Tibial artery (tissue), 4 donors: ENCODE measurements at regions of chr2 and their contacts with region 1.

Region 1: DNA sequence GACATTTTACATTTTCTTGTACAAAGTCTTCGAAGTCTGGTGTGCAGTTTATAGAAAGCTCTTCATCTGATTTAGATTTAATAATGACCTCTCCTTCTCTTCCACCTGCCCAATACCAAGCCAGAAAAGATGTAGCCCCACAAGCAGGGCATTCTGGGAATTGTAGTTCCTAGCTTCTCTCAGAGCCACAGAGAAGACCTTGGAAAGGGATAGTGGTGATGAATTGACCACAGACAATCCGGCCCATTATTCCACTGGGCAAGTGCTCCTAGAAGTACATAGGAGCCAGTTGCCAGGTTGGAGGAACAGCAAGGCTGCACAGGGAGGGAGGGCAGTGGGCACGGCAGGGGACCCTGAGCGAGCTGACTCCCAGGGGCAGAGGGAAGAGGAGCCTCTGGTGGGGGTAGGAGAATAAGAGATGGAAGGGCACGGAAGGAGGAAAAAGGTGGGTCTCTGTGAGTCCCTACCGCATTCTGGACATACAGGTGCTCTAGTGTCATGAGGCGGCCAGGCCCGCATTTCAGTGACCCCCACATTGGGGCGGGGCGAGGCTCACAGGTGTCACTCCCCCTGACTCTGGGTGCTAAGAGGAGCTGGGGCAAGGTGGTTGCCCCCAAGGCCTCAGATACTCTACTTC is 152.5 kb upstream of the HAAO start:
- DNase-seq: no peak
- H3K4me3 ChIP-seq: no peak overlapping the region
- H3K27ac ChIP-seq: no peak overlapping the region
- H3K4me1 ChIP-seq: peaks cover 0 to 17% (median 10%) of the 10 kb centered on the region in 4 donors
- H3K27me3 ChIP-seq: no peaks in the 10 kb centered on the region
- CTCF ChIP-seq: no peak

Region 2: DNA sequence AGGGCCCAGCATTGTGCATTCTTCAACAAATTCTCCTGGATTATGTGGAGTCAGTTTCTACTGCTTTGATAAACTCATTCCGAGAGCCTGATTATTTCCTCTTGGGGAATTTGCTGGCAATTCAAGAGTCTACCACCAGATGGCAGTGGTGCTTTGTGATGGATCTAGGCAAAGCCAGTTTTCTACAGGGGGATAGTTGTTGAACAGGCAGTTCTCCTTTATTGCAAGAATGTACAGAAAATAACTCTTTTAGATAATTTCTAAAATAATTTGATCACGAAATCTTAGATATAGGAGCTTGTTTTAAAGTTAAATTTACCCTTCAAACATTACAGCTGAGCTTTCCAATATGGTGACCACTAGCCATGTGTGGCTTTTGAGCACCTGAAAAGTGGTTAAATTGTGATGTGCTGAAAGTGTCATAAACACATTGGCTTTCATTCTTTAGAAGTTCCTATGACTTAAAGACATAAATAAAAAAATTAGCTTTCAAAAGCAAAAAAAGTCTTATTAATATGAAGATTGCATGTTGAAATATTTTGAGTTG is 85.8 kb before region 1 on chr2:
- intact Hi-C with region 1: loop called (anchors 5 kb)
- DNase-seq: peak; percentile 75 to 77
- H3K4me3 ChIP-seq: no peak overlapping the region
- H3K27ac ChIP-seq: peak overlapping the region in 1 of 2 donors; percentile 55
- H3K4me1 ChIP-seq: peaks cover 0 to 27% (median 7%) of the 10 kb centered on the region in 4 donors
- H3K27me3 ChIP-seq: no peaks in the 10 kb centered on the region
- CTCF ChIP-seq: peak; percentile 91 to 95

Region 3: GRCh38 chr2:43484323-43484930 is 539.5 kb after region 1 on chr2:
- intact Hi-C with region 1: loop called (anchors 2 kb)
- DNase-seq: no peak
- H3K4me3 ChIP-seq: no peak overlapping the region
- H3K27ac ChIP-seq: peak overlapping the region; percentile 65 to 80
- H3K4me1 ChIP-seq: peaks cover 0 to 70% (median 30%) of the 10 kb centered on the region in 4 donors
- H3K27me3 ChIP-seq: no peaks in the 10 kb centered on the region
- CTCF ChIP-seq: peak; percentile 68 to 84